AG04450 (cell line): ENCODE measurements at regions of chr2 and their contacts with region 1.

Region 1: GRCh38 chr2:25692143-25692542 is 18.8 kb upstream of the DTNB start:
- DNase-seq: no peak
- H3K4me3 ChIP-seq: no peak overlapping the region
- H3K27ac ChIP-seq: no peak overlapping the region
- H3K27me3 ChIP-seq: peaks cover 6% of the 10 kb centered on the region
- CTCF ChIP-seq: no peak

Region 2: DNA sequence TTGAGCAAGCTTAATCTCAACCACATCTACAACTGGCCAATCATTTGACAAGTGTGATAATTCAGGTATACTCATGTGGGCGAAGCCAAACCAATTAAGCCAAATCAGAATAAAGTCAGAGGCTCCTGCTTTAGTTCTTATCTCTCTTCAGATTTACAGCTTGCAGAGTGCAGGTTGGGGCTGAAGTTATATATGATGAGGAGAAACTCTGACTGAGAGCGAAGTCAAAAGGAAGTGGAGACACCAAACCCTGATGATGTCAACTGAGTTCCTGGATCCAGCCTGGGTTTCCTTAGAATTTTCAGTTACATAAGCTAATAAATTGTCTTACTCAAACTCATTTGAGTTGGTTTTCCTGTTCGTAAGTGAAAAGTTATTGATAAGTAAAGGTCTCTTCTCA is 112.2 kb after region 1 on chr2:
- CTCF ChIA-PET with region 1: interaction called, 10 read pairs
- POLR2A ChIA-PET with region 1: no interaction called
- DNase-seq: no peak
- H3K4me3 ChIP-seq: no peak overlapping the region
- H3K27ac ChIP-seq: no peak overlapping the region
- H3K27me3 ChIP-seq: no peaks in the 10 kb centered on the region
- CTCF ChIP-seq: no peak